ENCODE measurements at regions of chr1 and their contacts with region 1.

Region 1: DNA sequence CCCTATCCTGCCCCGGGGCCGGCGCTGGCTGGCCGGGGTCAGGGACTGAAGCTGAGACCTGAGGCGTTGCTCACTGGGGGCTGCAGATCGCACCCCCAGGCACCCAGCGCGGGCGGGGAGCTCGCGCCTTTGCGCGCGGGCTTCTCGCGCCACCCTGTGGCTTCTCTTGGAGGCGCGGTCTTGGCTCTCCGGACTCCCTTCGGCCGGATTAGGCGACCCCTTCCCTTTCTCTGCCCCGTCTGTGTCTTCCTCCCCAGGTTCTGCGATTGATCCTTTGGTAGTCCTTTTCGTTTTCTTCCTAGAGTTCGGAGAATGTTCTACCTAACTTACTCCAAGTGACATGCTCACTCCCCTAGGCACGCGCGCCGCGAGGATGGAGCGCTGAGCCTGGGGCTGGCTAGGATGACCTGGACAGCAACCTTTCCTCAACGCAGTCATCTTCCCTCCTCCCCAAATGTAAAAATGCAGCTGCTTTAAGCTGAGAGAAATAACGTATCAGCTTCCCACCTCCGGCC is 495 bp upstream of the NTRK1 start:
- DNase-seq: peak; percentile 56
- H3K4me3 Mint-ChIP-seq: peak overlapping the region; percentile 64
- H3K27ac Mint-ChIP-seq: no peak overlapping the region
- H3K4me1 Mint-ChIP-seq: peaks cover 20% of the 10 kb centered on the region
- H3K27me3 Mint-ChIP-seq: peaks cover 56% of the 10 kb centered on the region

Region 2: GRCh38 chr1:156689035-156689952 is 170.9 kb before region 1 on chr1:
- CTCF ChIA-PET with region 1: interaction called, 39 read pairs
- intact Hi-C with region 1: loop called (anchors 1 kb)
- DNase-seq: peak; percentile 80
- H3K4me3 Mint-ChIP-seq: no peak overlapping the region
- H3K27ac Mint-ChIP-seq: no peak overlapping the region
- H3K4me1 Mint-ChIP-seq: peaks cover 28% of the 10 kb centered on the region
- H3K27me3 Mint-ChIP-seq: peaks cover 46% of the 10 kb centered on the region

Region 3: GRCh38 chr1:156789621-156790318 is 70.4 kb before region 1 on chr1:
- CTCF ChIA-PET with region 1: interaction called, 177 read pairs
- intact Hi-C with region 1: no loop called
- DNase-seq: no peak
- H3K4me3 Mint-ChIP-seq: no peak overlapping the region
- H3K27ac Mint-ChIP-seq: no peak overlapping the region
- H3K4me1 Mint-ChIP-seq: no peaks in the 10 kb centered on the region
- H3K27me3 Mint-ChIP-seq: no peaks in the 10 kb centered on the region

Region 4: DNA sequence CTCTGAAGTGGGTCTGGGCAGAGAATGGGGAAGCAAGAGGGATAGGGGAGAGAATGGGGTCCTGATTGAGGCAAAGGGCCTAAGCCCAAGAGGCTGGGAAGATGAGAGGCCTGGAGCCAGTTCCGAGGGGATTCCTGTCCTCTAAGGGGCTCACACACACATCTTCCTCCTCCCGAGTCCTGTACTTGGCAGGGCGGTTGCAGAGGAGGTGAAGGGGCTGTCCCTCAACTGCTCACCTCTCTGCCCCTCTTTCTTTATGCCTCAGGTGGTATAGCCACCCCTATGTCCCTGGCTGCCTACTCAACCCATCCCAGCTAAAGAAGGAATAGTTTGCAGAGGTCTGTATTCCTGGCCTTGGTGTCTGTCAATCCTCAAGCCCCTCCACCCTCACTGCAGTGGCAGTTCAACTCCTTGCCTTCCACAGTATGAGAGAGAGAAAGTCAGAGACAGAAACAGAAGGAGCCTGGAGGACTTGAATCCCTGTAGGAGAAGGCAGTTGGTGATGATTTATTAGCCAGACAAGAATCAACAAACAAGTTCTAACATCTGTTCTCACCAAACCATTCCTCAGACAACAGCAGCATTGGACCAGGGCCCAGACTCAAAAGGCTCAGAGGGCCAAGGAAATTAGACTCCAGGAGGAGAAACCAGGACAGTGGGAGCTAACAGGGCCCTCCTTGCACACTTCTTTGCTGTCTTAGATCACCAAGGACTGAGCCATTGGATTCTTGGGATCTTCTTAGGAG is 54.2 kb before region 1 on chr1:
- CTCF ChIA-PET with region 1: interaction called, 177 read pairs
- intact Hi-C with region 1: loop called (anchors 1 kb)
- DNase-seq: no peak
- H3K4me3 Mint-ChIP-seq: no peak overlapping the region
- H3K27ac Mint-ChIP-seq: peak overlapping the region; percentile 67
- H3K4me1 Mint-ChIP-seq: peaks cover 33% of the 10 kb centered on the region
- H3K27me3 Mint-ChIP-seq: no peaks in the 10 kb centered on the region

Region 5: GRCh38 chr1:156821801-156822200 is 38.4 kb before region 1 on chr1:
- CTCF ChIA-PET with region 1: interaction called, 18 read pairs
- intact Hi-C with region 1: no loop called
- DNase-seq: peak; percentile 67
- H3K4me3 Mint-ChIP-seq: no peak overlapping the region
- H3K27ac Mint-ChIP-seq: no peak overlapping the region
- H3K4me1 Mint-ChIP-seq: peaks cover 25% of the 10 kb centered on the region
- H3K27me3 Mint-ChIP-seq: no peaks in the 10 kb centered on the region

Region 6: DNA sequence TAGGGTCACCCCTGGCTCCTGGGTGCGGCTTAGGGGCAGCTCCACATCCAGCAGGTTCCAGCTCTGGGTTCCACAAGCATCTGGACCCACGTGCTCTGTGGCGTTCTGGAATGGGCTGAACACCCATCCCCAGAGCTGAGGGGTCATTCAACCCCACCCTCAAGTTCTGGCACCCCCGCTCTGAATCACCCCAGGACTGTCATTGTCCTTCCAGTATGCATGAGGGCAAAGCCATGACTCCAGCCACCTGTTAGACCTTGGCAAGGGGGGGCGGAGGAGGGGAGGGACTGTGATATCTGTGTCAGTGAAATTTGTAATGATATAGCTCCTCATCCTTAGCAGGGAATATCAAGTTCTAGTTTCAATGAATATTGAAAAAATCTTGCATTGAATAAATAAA is 13.5 kb before region 1 on chr1:
- CTCF ChIA-PET with region 1: interaction called, 133 read pairs
- intact Hi-C with region 1: loop called (anchors 1 kb)
- DNase-seq: no peak
- H3K4me3 Mint-ChIP-seq: no peak overlapping the region
- H3K27ac Mint-ChIP-seq: no peak overlapping the region
- H3K4me1 Mint-ChIP-seq: peaks cover 22% of the 10 kb centered on the region
- H3K27me3 Mint-ChIP-seq: peaks cover 65% of the 10 kb centered on the region